ENCODE measurements at regions of chr2 and their contacts with region 1.

Region 1: DNA sequence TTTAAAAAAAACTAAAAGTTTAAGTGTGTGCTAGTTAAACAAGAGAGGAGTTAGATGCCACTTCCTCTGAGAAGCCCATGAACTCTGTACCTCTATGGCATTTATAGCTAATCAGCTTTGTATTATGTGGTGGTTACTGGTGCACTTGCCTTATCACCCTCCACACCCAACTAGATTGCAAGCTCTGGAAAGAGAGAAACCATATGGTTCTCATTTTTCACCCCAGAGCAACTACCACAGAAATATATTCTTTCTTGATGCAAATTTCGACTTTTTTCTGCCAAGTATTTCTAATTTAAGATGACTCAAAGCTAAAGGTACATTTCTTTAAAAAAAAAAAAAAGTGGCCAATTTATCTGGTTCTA is 24.2 kb downstream of the RAPH1 start:
- DNase-seq: no peak

Region 2: DNA sequence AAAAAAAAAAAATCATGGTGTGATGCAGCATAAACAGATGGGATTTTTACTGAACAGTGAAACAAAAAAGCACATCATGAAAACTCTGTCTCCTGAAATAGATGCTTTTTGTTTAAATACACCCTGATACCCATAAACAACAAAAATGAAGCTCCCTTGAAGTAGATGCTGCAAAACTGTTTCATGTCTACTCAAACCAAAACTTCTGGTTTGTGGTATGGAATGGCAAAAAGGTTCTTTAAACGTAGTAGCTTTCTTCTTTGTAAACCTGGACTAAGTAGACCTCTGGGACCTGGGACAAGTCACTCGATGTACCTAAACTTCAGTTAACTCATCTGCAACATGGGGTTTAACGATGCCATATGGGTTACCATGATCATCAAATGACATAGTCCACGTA is 88.6 kb after region 1 on chr2:
- intact Hi-C with region 1: loop called (anchors 5 kb)
- DNase-seq: no peak

Region 3: DNA sequence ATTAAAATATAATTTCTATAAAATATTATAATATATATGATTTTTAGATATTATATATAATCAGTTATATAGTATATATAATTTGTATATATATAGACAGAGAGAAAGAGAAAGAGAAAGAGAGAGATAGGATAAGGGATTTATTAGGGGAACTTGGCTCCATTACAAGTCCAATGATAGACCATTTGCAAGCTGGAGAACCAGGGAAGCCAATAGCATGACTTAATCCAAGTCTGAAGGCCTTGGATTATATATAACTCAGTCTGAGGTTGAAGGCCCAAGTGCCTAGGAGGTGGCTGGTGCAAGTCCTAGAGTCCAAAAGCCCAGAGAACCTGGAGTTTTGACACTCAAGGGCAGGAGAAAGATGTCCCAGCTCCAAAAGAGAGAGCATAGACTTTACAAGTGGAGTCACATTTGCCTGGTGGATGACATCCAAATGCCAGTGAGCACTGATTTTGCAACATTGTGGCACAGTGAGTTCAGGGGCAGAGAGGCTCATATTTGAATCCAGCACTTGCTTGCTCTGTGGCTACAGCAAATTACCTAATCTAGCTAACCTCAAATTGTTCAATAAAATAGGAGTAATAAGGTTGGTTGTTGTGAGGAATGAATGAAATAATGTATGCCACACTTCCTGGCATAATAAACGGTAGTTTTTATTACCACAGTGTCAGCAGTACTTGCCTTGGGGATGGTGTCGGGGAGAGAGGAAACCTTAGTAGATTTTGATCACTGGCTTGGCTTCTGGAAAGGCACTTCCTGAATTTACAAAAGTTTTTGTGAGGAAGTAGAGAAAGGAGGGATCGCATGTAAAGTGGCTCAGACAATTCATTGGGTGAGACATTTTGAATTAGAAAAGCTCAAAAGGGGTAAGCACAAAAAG is 125.9 kb after region 1 on chr2:
- intact Hi-C with region 1: no loop called
- DNase-seq: no peak